T-cell (primary cell): ENCODE measurements at regions of chr2 and their contacts with region 1.

Region 1: DNA sequence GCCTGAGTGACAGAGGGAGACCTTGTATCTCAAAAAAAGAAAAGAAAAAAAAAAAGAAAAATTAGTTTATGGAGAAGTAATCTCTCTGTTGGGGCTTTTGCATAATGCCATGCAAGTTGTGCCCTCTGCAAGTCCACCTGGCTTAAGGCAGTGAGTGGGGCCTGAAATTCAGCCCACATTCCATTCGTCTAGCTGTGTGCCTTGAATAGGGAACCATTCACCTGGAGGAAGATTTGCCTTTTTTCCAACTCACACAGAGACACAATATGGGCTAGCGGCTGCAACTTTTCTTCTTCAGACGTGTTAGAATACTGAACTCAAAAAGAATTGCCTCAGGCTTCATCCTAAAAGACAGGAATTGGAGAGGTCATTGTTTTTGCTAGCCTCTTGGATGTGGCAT is 160.0 kb upstream of the STON1 start:
- DNase-seq: no peak
- ATAC-seq: no peak
- H3K4me3 ChIP-seq: no peak overlapping the region
- H3K4me3 Mint-ChIP-seq: no peak overlapping the region
- H3K27ac ChIP-seq: no peak overlapping the region
- H3K27ac Mint-ChIP-seq: no peak overlapping the region
- H3K4me1 ChIP-seq: peaks cover 0 to 4% of the 10 kb centered on the region in 2 experiments
- H3K4me1 Mint-ChIP-seq: peaks cover 18 to 32% (median 26%) of the 10 kb centered on the region in 3 donors
- H3K27me3 ChIP-seq: no peaks in the 10 kb centered on the region
- H3K27me3 Mint-ChIP-seq: no peaks in the 10 kb centered on the region

Region 2: DNA sequence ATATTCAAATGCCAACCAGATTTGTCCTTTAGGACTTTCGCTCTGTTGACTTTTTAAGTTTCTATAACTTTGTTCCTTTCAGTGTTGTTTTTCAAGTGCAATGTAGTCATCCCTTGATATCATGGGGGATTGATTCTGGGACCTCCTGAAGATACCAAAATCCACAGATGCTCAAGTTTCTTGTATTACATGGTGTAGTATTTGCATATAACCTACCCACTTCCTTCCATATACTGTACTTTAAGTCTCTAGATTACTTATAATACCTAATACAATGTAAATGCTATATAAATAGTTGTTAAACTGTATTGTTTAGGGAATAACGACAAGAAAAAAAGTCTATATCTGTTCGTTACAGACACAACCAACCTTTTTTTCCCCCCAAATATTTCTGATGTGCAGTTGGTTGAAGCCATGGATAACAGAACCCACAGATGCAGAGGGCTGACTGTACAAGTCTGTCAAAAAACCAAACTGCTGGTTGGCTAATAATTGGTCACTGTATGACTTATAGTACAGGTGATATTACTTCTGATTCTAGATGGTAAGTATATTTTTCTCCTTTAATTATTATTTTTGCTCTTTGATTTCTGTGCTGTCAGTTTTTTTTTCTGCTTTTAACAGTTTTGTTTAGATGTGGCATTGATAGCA is 41.7 kb before region 1 on chr2:
- CTCF ChIA-PET with region 1: interaction called in 1 of 2 experiments, 11 read pairs
- POLR2A ChIA-PET with region 1: no interaction called
- DNase-seq: no peak
- ATAC-seq: peak in 1 of 4 experiments; percentile 44
- H3K4me3 ChIP-seq: no peak overlapping the region
- H3K4me3 Mint-ChIP-seq: peak overlapping the region in 1 of 3 donors; percentile 46
- H3K27ac ChIP-seq: no peak overlapping the region
- H3K27ac Mint-ChIP-seq: no peak overlapping the region
- H3K4me1 ChIP-seq: peaks cover 13 to 33% of the 10 kb centered on the region in 2 experiments
- H3K4me1 Mint-ChIP-seq: peaks cover 81 to 83% (median 83%) of the 10 kb centered on the region in 3 donors
- H3K27me3 ChIP-seq: no peaks in the 10 kb centered on the region
- H3K27me3 Mint-ChIP-seq: no peaks in the 10 kb centered on the region